OCI-LY7 (cell line): ENCODE measurements at regions of chr20 and their contacts with region 1.

Region 1: GRCh38 chr20:49797344-49797615 is 15.3 kb upstream of the SLC9A8 start:
- DNase-seq: no peak
- H3K4me3 ChIP-seq: no peak overlapping the region
- H3K27ac ChIP-seq: no peak overlapping the region
- H3K4me1 ChIP-seq: peaks cover 31% of the 10 kb centered on the region
- CTCF ChIP-seq: no peak

Region 2: DNA sequence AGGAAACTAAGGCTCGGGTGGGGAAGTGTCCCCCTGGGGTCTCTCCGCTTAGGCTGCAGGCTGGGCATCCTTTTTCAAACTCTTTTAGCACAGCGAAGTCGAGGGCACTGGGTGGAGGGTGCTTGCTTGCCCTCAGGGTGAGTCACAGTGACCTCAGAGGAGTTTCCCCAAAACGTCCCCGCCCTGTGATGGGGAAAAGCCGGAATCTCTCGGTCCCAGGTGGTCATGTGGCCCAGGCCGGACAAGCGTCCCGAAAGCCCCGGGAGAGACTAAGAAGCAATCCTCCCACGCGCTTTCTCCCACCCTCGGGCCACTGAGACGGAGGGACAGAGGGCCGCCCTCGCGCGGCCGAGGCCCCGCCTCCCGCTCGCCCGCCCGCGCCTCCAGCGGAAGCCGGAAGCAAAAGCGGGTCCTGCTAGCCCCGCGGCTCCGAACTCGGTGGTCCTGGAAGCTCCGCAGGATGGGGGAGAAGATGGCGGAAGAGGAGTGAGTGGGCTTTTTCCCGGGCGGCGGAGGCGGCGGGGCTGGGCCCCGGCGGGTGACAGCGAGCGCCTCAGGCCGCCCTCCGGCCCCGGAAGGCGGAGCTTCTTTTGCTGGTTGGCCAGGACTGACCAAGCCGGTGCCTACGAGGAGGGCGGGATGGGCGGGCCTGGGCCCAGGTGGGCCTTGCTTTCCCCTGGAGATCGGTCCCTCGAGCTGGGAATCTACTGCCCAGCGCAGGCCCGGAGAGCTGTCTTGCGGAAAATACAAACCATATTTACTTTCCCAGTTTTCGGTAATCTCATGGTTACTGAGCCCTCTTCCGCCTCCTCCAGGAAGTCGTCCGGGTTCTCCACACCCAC is 15.4 kb after region 1 on chr20 and contains the start of gene SLC9A8:
- CTCF ChIA-PET with region 1: no interaction called
- POLR2A ChIA-PET with region 1: interaction called, 13 read pairs
- intact Hi-C with region 1: no loop called
- DNase-seq: peak; percentile 92
- H3K4me3 ChIP-seq: peak within 1 kb of the TSS; percentile 81
- H3K27ac ChIP-seq: peak within 1 kb of the TSS; percentile 62
- H3K4me1 ChIP-seq: peaks cover 48% of the 10 kb centered on the region
- CTCF ChIP-seq: no peak
- total RNA-seq, gene SLC9A8: 13.9 and 30.3 TPM in 2 replicates

Region 3: DNA sequence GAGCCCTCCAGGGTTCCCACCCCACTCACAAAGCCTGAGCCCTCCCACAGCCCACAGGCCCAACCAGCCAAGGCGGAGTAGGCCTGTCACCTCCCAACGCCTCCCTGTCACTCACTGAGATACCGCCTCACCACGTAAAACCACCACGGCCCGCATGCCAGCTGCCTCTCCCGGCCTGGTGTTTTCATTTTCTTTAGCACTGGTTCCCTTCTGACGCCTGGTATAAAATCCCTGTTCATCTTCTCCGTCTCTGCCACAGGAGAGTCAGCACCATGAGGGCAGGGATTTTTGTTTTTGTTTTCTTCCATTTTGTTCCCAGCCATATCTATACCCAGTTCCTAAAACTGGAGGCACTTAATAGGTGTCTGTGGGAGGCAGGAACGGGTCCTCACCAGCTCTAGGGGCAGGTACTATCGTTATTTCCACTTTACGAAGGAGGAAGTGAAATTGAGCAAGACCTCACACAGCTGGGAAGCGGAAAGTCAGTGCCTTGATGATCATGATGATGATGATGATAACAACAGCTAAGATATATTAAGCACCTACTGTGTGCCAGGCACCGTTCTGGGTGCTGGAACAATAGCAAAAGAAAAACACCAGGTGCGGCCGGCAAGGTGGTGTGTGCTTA is 244.1 kb after region 1 on chr20:
- CTCF ChIA-PET with region 1: no interaction called
- POLR2A ChIA-PET with region 1: no interaction called
- intact Hi-C with region 1: no loop called
- DNase-seq: peak; percentile 88
- H3K4me3 ChIP-seq: peak overlapping the region; percentile 69
- H3K27ac ChIP-seq: peak overlapping the region; percentile 88
- H3K4me1 ChIP-seq: peaks cover 36% of the 10 kb centered on the region
- CTCF ChIP-seq: no peak